ENCODE measurements at regions of chr6 and their contacts with region 1.

Region 1: DNA sequence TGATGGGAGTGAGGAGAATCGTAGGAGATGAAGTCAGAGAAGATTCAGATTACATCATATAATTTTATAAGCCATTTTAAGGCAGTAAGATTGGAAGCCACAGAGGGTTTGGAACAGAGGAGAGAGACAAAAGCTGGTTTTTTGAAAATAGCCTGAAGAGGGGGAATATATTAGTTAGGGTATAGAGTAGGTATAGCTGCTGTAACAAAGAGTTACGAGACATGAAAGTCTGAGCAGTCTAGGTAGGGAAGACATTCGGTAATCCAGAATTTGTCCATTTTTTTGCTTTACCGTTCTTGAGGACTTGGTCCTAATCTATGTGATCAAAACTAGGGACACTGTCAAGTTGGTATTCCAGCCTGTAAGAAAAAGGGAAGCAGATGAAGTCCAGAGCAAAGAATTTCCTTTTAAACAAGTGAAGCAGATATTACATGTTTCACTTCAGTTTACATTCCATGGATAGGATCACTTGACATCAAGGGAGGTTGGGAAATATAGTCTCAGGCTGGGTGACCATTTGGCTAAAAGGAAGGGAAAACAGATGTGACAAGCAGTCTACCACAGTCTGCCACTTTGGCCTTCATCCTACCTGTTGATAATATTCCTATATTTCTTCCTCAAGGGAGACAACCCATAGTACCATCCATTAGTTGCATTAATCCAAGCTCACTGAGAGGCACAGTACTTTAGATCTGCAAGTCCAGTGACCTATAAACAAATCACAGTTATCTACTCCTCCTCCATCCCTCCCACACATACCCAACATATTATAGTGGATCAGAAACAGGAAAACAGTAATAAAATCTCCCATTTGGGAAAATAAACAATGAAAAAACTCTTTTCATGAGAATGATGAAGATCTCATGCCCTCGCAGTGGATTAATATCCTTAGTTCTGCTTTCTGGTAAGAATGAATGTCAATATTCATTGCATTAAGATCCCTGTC is 10.2 kb downstream of the FAM135A start:
- DNase-seq: no peak
- H3K4me3 ChIP-seq: no peak overlapping the region
- H3K27ac ChIP-seq: no peak overlapping the region
- H3K4me1 ChIP-seq: no peaks in the 10 kb centered on the region
- CTCF ChIP-seq: no peak

Region 2: DNA sequence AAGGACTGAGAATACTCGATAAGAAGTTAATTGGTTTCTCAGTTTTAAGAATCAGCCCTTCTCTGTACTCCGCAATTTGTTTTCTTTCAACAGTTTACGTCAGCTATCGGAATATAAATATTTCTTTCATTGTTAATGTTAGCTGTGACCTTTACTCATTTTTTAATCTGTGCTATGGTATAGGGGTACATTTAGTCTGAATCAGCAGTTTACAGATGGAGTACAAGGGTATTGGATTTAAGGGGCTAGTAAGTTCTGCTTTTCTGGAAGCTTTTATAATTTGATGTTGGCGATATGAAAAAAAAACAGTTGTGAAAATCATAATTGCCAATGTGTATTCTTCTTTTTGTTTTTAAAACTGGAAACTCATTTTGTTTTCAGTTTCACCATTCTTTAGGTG is 12.9 kb after region 1 on chr6:
- CTCF ChIA-PET with region 1: no interaction called
- POLR2A ChIA-PET with region 1: interaction called, 12 read pairs
- intact Hi-C with region 1: no loop called
- DNase-seq: no peak
- H3K4me3 ChIP-seq: no peak overlapping the region
- H3K27ac ChIP-seq: no peak overlapping the region
- H3K4me1 ChIP-seq: no peaks in the 10 kb centered on the region
- CTCF ChIP-seq: no peak

Region 3: GRCh38 chr6:70507161-70507560 is 83.7 kb after region 1 on chr6:
- CTCF ChIA-PET with region 1: no interaction called
- POLR2A ChIA-PET with region 1: no interaction called
- intact Hi-C with region 1: no loop called
- DNase-seq: no peak
- H3K4me3 ChIP-seq: no peak overlapping the region
- H3K27ac ChIP-seq: no peak overlapping the region
- H3K4me1 ChIP-seq: no peaks in the 10 kb centered on the region
- CTCF ChIP-seq: no peak

Region 4: GRCh38 chr6:70599187-70599586 is 175.7 kb after region 1 on chr6:
- CTCF ChIA-PET with region 1: no interaction called
- POLR2A ChIA-PET with region 1: no interaction called
- intact Hi-C with region 1: no loop called
- DNase-seq: no peak
- H3K4me3 ChIP-seq: no peak overlapping the region
- H3K27ac ChIP-seq: no peak overlapping the region
- H3K4me1 ChIP-seq: no peaks in the 10 kb centered on the region
- CTCF ChIP-seq: no peak

Region 5: GRCh38 chr6:70700922-70701876 is 277.7 kb after region 1 on chr6:
- CTCF ChIA-PET with region 1: no interaction called
- POLR2A ChIA-PET with region 1: interaction called, 15 read pairs
- intact Hi-C with region 1: no loop called
- DNase-seq: no peak
- H3K4me3 ChIP-seq: no peak overlapping the region
- H3K27ac ChIP-seq: no peak overlapping the region
- H3K4me1 ChIP-seq: no peaks in the 10 kb centered on the region
- CTCF ChIP-seq: no peak